ENCODE measurements at regions of chr9 and their contacts with region 1.

Region 1: GRCh38 chr9:34419716-34420504 is 38.5 kb downstream of the FAM219A start:
- DNase-seq: no peak
- H3K4me3 ChIP-seq: no peak overlapping the region
- H3K27ac ChIP-seq: no peak overlapping the region
- H3K4me1 ChIP-seq: no peaks in the 10 kb centered on the region
- H3K27me3 ChIP-seq: no peaks in the 10 kb centered on the region
- CTCF ChIP-seq: no peak
- EP300 ChIP-seq: no peak
- POLR2A ChIP-seq: no peak

Region 2: DNA sequence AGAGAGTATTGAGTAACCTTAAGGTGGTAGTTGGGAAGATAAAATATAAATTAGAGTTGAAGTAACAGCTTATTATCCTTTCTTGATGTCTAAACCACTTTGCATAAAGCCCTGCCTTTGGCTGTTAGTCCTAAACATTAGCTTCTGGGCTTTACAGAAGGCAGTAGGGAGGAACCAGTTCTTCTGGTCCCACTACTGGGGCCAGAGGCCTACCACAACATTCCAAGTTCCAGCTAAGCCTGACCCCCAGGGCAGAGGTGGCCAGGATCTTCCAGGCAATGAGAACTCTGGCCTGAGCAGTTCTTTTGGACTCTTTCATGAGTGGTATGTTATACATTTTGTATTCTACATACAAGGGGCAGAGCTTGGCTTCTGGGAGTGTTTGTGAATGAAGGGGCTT is 64.8 kb after region 1 on chr9:
- intact Hi-C with region 1: loop called in 1 of 4 experiments (anchors 5 kb)
- DNase-seq: no peak
- H3K4me3 ChIP-seq: no peak overlapping the region
- H3K27ac ChIP-seq: no peak overlapping the region
- H3K4me1 ChIP-seq: no peaks in the 10 kb centered on the region
- H3K27me3 ChIP-seq: no peaks in the 10 kb centered on the region
- CTCF ChIP-seq: no peak
- EP300 ChIP-seq: no peak
- POLR2A ChIP-seq: no peak

Measured in ovary (tissue), 10 donors.